ENCODE measurements at regions of chr13 and their contacts with region 1.

Region 1: GRCh38 chr13:24323036-24323738 is 13.8 kb downstream of the C1QTNF9 start:
- DNase-seq: no peak
- H3K4me3 ChIP-seq: no peak overlapping the region
- H3K27ac ChIP-seq: no peak overlapping the region
- H3K4me1 ChIP-seq: no peaks in the 10 kb centered on the region
- H3K27me3 ChIP-seq: no peaks in the 10 kb centered on the region
- CTCF ChIP-seq: no peak
- EP300 ChIP-seq: no peak
- POLR2A ChIP-seq: no peak
- RAD21 ChIP-seq: no peak

Region 2: GRCh38 chr13:23292586-23292985 is 1030.6 kb before region 1 on chr13:
- CTCF ChIA-PET with region 1: no interaction called
- POLR2A ChIA-PET with region 1: no interaction called
- DNase-seq: no peak
- H3K4me3 ChIP-seq: no peak overlapping the region
- H3K27ac ChIP-seq: no peak overlapping the region
- H3K4me1 ChIP-seq: no peaks in the 10 kb centered on the region
- H3K27me3 ChIP-seq: no peaks in the 10 kb centered on the region
- CTCF ChIP-seq: no peak
- EP300 ChIP-seq: no peak
- POLR2A ChIP-seq: no peak
- RAD21 ChIP-seq: no peak

Region 3: DNA sequence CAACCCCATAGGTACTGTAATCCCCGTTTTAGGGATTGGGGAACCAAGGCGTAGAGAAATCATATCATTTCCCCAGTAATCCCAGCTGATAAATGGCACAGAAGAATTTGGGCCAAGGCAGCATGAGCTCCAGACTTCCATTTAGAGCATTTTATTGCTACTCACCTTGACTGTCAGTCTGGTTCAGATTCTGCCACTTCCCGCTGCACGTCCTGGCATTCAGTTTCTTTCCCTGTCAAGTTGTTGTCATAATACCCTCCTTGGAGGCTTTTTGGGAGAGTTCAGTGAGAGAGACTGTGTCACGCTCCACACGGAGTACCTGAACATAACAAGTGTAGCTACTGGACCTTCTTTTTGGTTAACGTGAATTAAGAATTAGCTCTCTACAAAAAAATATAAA is 21.3 kb before region 1 on chr13:
- CTCF ChIA-PET with region 1: no interaction called
- POLR2A ChIA-PET with region 1: no interaction called
- DNase-seq: no peak
- H3K4me3 ChIP-seq: no peak overlapping the region
- H3K27ac ChIP-seq: no peak overlapping the region
- H3K4me1 ChIP-seq: peaks cover 0 to under 1% (median 0%) of the 10 kb centered on the region in 4 experiments; a peak in 1 of 7 replicates
- H3K27me3 ChIP-seq: no peaks in the 10 kb centered on the region
- CTCF ChIP-seq: no peak
- EP300 ChIP-seq: no peak
- POLR2A ChIP-seq: no peak
- RAD21 ChIP-seq: no peak

Region 4: GRCh38 chr13:24557081-24557480 is 233.9 kb after region 1 on chr13:
- CTCF ChIA-PET with region 1: interaction called, 11 read pairs
- POLR2A ChIA-PET with region 1: no interaction called
- DNase-seq: no peak
- H3K4me3 ChIP-seq: no peak overlapping the region
- H3K27ac ChIP-seq: no peak overlapping the region
- H3K4me1 ChIP-seq: no peaks in the 10 kb centered on the region
- H3K27me3 ChIP-seq: no peaks in the 10 kb centered on the region
- CTCF ChIP-seq: no peak
- EP300 ChIP-seq: no peak
- POLR2A ChIP-seq: no peak
- RAD21 ChIP-seq: no peak